Astrocyte of the cerebellum (primary cell): ENCODE measurements at regions of chrX and their contacts with region 1.

Region 1: DNA sequence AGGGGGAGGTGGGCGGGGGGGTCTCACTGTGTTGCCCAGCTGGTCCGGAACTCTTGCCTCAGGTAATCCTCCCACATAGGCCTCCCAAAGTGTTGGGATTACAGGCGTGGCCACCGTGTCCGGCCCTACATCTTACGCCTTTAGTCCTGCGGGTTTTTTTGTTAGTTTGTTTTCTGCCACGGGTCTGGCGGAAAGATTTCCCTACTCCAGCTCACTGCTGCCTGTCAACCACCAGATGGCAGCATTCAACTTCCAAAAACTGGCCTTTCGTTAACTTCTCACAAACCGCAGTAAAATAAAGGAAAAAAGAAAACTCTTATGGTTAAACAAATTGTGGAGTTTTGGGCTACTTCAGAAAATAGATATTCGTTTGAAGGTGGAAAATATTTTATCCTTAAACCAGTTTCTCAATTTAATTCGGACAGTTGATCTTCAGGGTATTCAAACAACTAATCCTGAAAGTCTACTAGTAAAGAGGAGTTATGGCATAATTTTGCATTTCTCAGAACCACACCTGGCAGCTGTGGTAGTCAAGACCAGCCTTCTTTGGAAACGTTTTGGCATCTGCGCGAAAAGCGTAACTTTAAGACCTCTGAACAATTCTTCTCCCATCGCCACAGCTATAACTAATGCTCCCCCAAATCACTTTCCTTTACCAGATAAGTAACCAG is 41.1 kb downstream of the LUZP4 start:
- DNase-seq: peak; percentile 53
- H3K4me3 ChIP-seq: no peak overlapping the region
- CTCF ChIP-seq: peak; percentile 86

Region 2: DNA sequence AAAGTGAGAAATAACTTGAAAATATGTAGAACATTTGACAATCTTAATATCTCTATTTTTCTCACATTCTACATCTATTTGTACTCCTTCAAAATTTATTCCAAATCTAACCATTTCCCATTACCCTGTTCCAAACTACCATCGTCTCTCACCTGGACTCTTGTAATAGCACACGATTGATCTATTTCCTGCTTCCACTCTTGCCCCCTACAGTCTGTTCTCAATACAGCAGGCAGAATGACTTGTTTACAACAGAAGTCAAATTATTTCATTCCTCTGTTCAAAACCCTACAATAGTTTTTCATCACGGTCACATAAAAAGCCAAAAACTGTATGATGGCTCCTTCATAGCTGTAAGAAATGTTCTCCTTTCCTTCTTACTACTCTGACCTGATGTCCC is 62.2 kb before region 1 on chrX:
- in situ Hi-C with region 1: no loop called
- DNase-seq: no peak
- H3K4me3 ChIP-seq: no peak overlapping the region
- CTCF ChIP-seq: peak; percentile 20

Region 3: GRCh38 chrX:115400960-115401359 is 70.3 kb after region 1 on chrX:
- in situ Hi-C with region 1: no loop called
- DNase-seq: no peak
- H3K4me3 ChIP-seq: no peak overlapping the region
- CTCF ChIP-seq: no peak

Region 4: DNA sequence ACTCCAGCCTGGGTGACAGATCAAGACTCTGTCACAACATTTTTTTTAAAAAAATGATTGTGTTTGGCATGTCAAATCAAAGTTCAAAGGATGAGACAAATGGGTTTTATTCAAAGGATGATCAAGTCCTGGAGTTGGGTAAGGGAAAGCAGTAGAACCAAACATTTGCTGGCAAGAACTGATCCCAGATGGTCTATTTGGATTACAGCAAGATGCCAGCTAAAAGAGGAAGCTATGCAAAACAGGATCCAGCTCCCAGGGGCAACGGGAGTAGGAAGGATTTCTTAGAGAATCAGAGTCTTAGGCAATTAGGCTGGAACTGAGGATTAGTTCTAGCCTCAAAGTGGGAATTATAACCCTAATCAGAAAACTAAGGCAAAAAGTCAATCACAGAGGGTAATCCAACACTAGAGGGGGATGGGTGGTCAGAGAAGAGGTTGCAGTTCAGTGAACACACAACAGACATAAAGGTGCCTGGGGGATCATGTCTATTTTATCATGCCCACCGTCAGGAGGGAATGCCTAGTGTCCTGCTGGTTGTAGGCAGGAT is 97.3 kb after region 1 on chrX:
- in situ Hi-C with region 1: no loop called
- DNase-seq: no peak
- H3K4me3 ChIP-seq: no peak overlapping the region
- CTCF ChIP-seq: no peak

Region 5: GRCh38 chrX:115642895-115643530 is 312.4 kb after region 1 on chrX:
- in situ Hi-C with region 1: loop called (anchors 10 kb)
- DNase-seq: peak; percentile 67
- H3K4me3 ChIP-seq: no peak overlapping the region
- CTCF ChIP-seq: peak; percentile 84

Region 6: GRCh38 chrX:116246261-116246660 is 915.6 kb after region 1 on chrX:
- in situ Hi-C with region 1: no loop called
- DNase-seq: no peak
- H3K4me3 ChIP-seq: no peak overlapping the region
- CTCF ChIP-seq: no peak